Activated CD4-positive, alpha-beta memory T cell treated with anti-CD3 and anti-CD28 coated beads for 36 hours (primary cell): ENCODE measurements at regions of chr3 and their contacts with region 1.

Region 1: DNA sequence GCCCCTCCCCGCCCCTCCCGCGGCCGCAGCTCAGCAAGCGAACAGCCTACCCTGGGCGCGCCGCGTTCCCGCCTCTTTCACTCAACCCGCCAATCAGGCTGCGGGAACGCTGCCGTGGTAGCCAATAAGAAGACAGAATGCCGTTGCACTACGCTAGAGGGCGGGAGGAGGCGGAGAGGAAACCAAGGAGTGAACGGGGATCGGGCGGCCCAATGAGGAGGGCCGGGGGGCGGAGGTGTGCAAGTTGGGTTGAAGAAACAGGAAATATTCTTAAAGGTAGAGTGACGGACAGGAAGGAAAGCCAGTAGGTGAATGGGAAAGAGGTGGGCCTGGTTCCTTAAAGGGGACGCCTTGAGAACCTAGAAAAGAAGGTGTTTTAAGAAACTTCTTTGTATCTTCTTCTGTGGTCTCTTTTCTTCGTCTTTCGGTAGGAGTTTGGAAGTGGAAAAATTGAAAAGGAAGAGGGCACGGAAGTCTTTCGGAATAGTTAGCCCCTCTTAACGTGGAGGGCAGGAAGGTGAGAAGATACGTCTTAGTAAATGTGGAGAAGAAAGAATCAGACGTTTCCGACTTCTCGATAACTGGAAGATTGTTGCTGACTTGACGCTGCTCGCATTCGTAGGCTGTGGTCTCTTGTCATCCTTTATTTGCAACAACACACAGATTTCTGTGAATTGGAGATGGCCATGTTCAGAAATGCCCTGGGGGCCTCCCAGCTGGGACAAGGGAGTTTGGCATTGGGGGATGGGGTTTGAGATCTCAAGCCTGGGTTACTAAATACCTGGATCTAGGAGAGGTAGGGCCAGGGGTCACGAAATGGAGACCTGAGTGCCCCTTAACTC is 437 bp upstream of the USF3 start:
- DNase-seq: peak; percentile 100
- H3K4me3 Mint-ChIP-seq: no peak overlapping the region
- H3K27ac Mint-ChIP-seq: no peak overlapping the region
- H3K4me1 Mint-ChIP-seq: peaks cover 20% of the 10 kb centered on the region
- H3K27me3 Mint-ChIP-seq: no peaks in the 10 kb centered on the region

Region 2: DNA sequence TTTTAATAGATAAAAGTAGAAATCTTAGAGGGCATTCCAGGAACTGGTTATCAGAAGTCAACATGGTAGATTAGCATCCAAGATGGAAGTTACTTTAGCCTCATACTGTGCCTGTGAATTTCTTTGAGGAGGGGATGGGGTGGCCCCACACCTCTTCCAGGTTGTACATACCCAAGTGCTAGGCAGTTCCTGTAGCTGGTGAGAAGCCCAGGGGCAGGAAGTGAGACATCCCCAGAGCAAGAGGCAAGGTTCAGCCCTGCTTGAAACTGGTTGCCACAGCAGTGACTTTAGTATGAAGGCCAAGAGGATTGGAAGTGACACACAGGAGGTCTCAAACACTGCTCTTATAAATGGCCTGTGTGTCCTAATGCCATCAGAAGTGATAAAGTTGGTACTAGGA is 694.2 kb before region 1 on chr3:
- CTCF ChIA-PET with region 1: no interaction called
- POLR2A ChIA-PET with region 1: no interaction called
- intact Hi-C with region 1: loop called (anchors 5 kb)
- DNase-seq: peak; percentile 81
- H3K4me3 Mint-ChIP-seq: no peak overlapping the region
- H3K27ac Mint-ChIP-seq: peak overlapping the region; percentile 84
- H3K4me1 Mint-ChIP-seq: peaks cover 68% of the 10 kb centered on the region
- H3K27me3 Mint-ChIP-seq: no peaks in the 10 kb centered on the region

Region 3: DNA sequence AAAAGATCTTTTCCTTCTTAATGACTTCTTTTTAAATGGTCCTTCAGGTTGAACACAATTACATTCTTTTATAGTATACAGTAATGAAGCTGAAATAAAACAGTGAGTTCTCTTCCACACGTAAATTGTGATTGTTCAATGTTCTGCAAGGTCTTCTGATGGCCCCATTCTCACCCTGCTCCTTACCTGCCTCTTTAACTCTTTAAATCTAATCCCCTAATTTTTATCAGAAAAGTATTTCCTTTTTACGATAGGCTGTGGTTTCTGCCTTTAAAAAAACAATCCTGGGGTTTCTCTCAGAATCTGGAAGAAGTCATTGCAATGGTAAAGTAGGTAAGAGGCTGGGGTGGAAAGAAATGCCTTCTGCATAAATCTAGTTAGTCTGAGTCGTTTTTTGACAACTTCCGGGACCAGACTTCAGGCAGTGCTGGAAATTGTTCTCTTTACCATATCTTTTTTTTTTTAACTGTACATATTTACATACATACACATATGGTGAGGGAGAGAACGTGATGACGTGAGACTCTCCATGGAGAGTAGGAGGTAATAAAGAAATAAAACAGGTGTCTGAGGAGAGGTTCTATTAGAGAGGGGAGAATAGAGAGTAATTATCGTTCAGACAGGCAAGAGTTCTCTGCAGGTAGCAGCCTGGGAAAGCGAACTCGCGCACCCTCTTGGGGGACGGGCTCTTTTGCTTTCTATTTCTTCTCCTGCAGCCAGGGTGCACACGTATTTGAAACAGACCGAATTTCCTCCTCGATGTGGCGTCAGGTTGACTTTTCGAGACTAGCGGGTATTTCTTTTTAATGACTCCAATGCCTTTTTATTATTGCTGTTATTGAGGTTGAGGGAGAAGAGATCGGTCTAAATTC is 164.8 kb before region 1 on chr3 and contains the start of gene SIDT1:
- CTCF ChIA-PET with region 1: no interaction called
- POLR2A ChIA-PET with region 1: no interaction called
- intact Hi-C with region 1: loop called (anchors 5 kb)
- DNase-seq: peak; percentile 79
- H3K4me3 Mint-ChIP-seq: peak within 1 kb of the TSS; percentile 98
- H3K27ac Mint-ChIP-seq: peak within 1 kb of the TSS; percentile 96
- H3K4me1 Mint-ChIP-seq: peaks cover 45% of the 10 kb centered on the region
- H3K27me3 Mint-ChIP-seq: peaks cover 1% of the 10 kb centered on the region
- total RNA-seq, gene SIDT1: 11.3 TPM

Region 4: DNA sequence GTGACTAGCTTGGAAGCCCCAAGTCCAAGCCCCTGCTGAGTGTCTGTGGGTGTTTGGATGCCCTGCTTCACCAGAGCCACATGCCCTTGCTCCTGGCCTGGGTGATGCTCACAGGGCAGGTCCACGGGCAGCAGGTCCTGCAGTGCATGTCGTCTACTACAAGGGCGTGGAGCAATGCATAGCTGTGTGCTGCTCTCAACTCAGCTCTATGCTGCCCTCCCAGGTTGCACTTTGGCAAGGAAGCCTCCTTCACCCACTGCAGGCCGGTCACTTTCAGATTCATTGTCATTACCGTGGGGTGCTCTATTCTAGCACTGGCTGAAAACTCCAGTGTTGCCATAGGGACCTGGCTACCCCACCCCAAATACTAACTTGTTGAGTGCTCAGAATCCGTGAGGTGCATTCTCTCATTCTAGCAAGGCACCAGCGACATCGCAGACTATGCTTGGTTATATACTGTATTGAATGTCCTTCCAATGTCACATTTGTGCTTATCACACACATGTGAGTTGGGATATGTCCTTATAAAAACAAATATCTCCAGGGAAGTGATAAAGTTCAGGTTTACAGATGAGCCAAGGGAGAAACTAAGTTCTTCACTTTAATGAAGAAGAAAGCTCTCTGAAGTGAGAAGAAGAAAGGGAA is 193.5 kb after region 1 on chr3:
- CTCF ChIA-PET with region 1: no interaction called
- POLR2A ChIA-PET with region 1: no interaction called
- intact Hi-C with region 1: no loop called
- DNase-seq: no peak
- H3K4me3 Mint-ChIP-seq: no peak overlapping the region
- H3K27ac Mint-ChIP-seq: no peak overlapping the region
- H3K4me1 Mint-ChIP-seq: no peaks in the 10 kb centered on the region
- H3K27me3 Mint-ChIP-seq: no peaks in the 10 kb centered on the region

Region 5: GRCh38 chr3:113947372-113948014 is 250.6 kb after region 1 on chr3 and contains the start of gene ZDHHC23:
- CTCF ChIA-PET with region 1: no interaction called
- POLR2A ChIA-PET with region 1: no interaction called
- intact Hi-C with region 1: loop called (anchors 2 kb)
- DNase-seq: peak; percentile 71
- H3K4me3 Mint-ChIP-seq: peak within 1 kb of the TSS; percentile 74
- H3K27ac Mint-ChIP-seq: peak within 1 kb of the TSS; percentile 52
- H3K4me1 Mint-ChIP-seq: peaks cover 12% of the 10 kb centered on the region
- H3K27me3 Mint-ChIP-seq: peaks cover 14% of the 10 kb centered on the region
- total RNA-seq, gene ZDHHC23: 5.4 to 6.6 TPM

Region 6: DNA sequence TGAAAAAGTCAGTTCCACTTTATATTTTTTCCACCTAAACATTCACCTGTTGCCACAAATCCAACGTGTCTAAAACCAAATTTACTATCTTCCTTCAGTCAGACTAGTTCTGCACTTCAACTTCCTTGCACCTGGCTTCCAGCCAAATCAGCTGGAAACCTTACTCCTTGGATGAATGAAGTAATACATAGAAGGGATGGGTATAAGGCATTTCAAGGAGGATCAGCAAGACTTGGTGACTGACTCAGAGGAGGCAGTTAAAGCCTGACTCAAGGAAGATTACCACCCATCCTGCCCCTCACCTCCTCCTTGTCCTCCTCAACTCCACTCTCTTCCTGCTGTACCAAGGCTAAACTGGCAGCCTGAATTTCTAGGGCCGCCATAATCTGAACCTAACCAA is 396.7 kb after region 1 on chr3:
- CTCF ChIA-PET with region 1: no interaction called
- POLR2A ChIA-PET with region 1: no interaction called
- intact Hi-C with region 1: no loop called
- DNase-seq: no peak
- H3K4me3 Mint-ChIP-seq: no peak overlapping the region
- H3K27ac Mint-ChIP-seq: no peak overlapping the region
- H3K4me1 Mint-ChIP-seq: no peaks in the 10 kb centered on the region
- H3K27me3 Mint-ChIP-seq: no peaks in the 10 kb centered on the region

Region 7: DNA sequence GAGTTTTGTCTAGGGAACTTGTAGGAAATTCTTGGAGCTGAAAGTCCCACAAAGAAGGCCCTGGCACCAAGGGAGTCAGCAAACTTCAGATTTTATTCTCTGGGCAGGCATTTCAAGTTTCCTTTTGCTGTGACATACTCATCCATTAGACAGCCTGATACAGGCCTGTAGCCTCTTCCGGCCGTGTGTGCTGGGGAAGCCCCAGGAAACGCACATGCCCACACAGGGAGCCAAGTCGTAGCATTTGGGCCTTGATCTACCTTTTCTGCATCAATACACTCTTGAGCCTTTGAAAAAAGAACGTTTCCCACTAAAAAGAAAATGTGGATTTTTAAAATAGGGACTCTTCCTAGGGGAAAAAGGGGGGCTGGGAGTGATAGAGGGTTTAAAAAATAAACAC is 612.0 kb after region 1 on chr3:
- CTCF ChIA-PET with region 1: no interaction called
- POLR2A ChIA-PET with region 1: no interaction called
- intact Hi-C with region 1: loop called (anchors 5 kb)
- DNase-seq: peak; percentile 83
- H3K4me3 Mint-ChIP-seq: peak overlapping the region; percentile 70
- H3K27ac Mint-ChIP-seq: peak overlapping the region; percentile 99
- H3K4me1 Mint-ChIP-seq: peaks cover 77% of the 10 kb centered on the region
- H3K27me3 Mint-ChIP-seq: no peaks in the 10 kb centered on the region